Dendritic cell treated with granulocyte-macrophage colony-stimulating factor and Interleukin-4, amounts not matched to agents 40 ng/mL and 50 ng/mL, for 4 days (primary cell): ENCODE measurements at regions of chr16 and their contacts with region 1.

Region 1: DNA sequence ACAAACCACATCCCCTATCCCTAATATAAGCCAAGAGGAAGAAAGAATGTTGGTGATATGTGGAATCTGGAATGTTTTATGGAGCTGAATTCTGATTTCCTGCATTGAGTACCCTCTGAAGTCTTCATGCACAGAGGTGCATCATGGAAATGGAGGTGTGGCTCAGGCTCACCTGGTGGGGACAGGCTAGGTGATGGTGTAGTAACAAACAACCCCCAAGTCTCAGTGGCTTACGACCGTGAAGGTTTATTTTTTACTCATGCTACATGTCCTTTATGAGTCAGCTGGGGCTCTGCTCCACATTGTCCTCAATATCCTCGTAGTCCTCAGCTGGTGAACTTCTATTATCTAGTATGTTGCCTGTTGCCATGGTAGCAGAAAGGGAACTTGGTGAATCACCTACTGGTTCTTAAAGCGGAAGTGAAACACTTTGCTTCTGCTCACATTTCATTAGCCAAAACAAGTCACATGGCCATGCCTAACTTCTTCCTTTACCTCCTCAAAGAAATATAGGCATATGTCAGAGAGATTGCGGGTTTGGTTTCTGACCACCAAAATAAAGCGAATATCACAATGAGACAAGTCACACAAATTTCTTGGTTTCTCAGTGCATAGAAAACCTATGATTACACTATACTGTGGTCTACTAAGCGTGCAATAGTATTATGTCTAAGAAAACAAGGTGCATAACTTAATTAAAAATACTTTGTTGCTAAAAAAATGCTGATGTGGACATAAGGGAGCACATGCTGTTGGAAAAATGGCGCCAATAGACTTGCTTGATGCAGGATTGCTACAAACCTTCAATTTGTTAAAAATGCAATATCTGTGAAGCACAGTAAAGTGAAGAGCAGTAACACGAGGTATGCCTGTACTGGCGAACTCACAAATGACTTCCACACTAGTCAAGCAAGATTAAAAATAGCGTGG is at the start of gene PMFBP1:
- H3K4me3 Mint-ChIP-seq: no peak within 1 kb of the TSS
- H3K27ac Mint-ChIP-seq: peak within 1 kb of the TSS; percentile 49
- H3K4me1 Mint-ChIP-seq: peaks cover 61% of the 10 kb centered on the region
- H3K27me3 Mint-ChIP-seq: no peaks in the 10 kb centered on the region

Region 2: GRCh38 chr16:72085002-72085401 is 87.4 kb before region 1 on chr16:
- intact Hi-C with region 1: no loop called
- H3K4me3 Mint-ChIP-seq: no peak overlapping the region
- H3K27ac Mint-ChIP-seq: no peak overlapping the region
- H3K4me1 Mint-ChIP-seq: no peaks in the 10 kb centered on the region
- H3K27me3 Mint-ChIP-seq: no peaks in the 10 kb centered on the region

Region 3: DNA sequence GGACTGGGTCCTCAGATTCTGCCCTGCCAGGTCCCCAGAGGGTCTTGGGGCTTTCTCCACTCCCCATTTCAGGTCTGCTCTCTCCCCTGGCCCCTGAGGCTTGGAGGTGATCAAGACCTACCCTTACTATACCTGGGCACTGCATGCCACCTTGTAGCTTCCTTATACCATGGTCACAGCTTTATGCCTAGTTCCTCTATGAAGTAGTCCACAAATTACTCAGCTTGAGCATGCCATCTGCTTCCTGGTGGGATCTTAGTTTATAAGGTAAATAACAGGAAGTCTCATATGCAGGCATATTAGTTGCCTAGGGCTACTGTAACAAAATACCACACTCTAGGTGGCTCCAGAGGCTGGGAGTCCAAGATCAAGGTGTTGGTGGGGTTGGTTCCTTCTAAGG is 10.6 kb after region 1 on chr16:
- intact Hi-C with region 1: loop called (anchors 1 kb)
- H3K4me3 Mint-ChIP-seq: no peak overlapping the region
- H3K27ac Mint-ChIP-seq: no peak overlapping the region
- H3K4me1 Mint-ChIP-seq: peaks cover 8% of the 10 kb centered on the region
- H3K27me3 Mint-ChIP-seq: no peaks in the 10 kb centered on the region

Region 4: DNA sequence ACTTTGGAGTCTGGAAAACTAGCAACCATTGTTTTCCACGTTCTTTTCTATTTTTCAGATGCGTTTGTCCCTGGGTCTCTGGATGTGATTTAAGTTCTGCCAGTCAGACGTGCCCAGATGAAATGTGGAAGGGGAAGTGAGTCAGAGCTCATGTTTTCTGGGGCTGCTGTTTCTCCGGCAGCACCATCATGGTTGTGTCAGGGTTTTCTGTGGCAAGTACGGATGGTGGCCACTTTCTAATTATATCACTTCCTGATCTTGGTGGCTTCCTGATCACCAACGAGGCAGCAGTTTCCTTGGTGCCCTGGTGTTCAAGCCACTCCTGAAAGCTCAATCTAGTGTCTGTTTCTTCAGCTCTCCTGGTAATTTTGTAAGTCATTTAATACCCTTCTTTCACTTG is 31.0 kb after region 1 on chr16:
- intact Hi-C with region 1: loop called (anchors 1 kb)
- H3K4me3 Mint-ChIP-seq: peak overlapping the region; percentile 52
- H3K27ac Mint-ChIP-seq: peak overlapping the region; percentile 99
- H3K4me1 Mint-ChIP-seq: peaks cover 69% of the 10 kb centered on the region
- H3K27me3 Mint-ChIP-seq: no peaks in the 10 kb centered on the region

Region 5: DNA sequence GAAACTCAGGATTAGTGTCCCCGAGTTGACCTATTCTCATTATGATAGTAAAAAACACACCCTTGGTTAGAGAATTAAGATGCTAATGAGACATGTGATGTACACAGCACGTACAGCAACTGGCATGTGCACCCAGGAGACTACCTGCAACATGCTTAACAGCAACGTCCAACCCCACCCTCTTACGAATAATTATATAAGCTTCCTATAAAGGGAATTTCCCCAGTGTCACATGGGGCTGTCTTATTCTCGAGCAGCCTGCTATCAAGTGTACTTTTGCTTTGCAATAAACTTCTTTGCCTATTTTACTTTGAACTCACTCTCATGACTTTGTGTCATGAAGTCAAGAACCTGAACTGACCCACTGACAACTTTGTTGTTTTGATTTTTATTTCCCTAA is 62.0 kb after region 1 on chr16:
- intact Hi-C with region 1: no loop called
- H3K4me3 Mint-ChIP-seq: no peak overlapping the region
- H3K27ac Mint-ChIP-seq: no peak overlapping the region
- H3K4me1 Mint-ChIP-seq: peaks cover 10% of the 10 kb centered on the region
- H3K27me3 Mint-ChIP-seq: no peaks in the 10 kb centered on the region

Region 6: DNA sequence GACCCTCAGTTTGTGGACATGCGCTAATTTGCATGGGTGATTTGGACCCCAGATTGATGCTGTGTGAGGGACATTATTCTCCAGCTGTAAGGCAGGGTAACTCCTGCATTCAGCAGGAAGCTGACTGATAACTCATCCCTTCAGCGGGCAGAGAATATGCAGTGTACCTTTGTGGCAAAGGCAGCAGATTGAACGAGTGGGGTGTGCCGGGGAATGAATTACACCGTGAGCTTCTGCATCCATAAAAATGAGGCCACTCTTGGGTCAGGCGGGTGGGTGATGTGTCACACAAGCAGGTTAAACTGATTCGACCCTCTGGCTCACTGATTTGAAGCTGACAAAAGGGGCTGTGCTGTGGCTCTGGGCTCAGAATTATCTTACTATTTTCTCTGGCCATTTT is 128.5 kb after region 1 on chr16:
- intact Hi-C with region 1: no loop called
- H3K4me3 Mint-ChIP-seq: no peak overlapping the region
- H3K27ac Mint-ChIP-seq: no peak overlapping the region
- H3K4me1 Mint-ChIP-seq: no peaks in the 10 kb centered on the region
- H3K27me3 Mint-ChIP-seq: no peaks in the 10 kb centered on the region

Region 7: GRCh38 chr16:73154063-73154870 is 981.9 kb after region 1 on chr16:
- intact Hi-C with region 1: loop called (anchors 5 kb)
- H3K4me3 Mint-ChIP-seq: peak overlapping the region; percentile 42
- H3K27ac Mint-ChIP-seq: peak overlapping the region; percentile 90
- H3K4me1 Mint-ChIP-seq: peaks cover 71% of the 10 kb centered on the region
- H3K27me3 Mint-ChIP-seq: no peaks in the 10 kb centered on the region